Activated CD8-positive, alpha-beta T cell treated with anti-CD3 and anti-CD28 coated beads, Interleukin-2, amount 10 ng/mL, durations not matched to agents 7 days and 5 days (primary cell): ENCODE measurements at regions of chr5 and their contacts with region 1.

Region 1: GRCh38 chr5:77143998-77144836 is 57.1 kb upstream of the ZBED3 start:
- DNase-seq: peak; percentile 74
- ATAC-seq: peak; percentile 68
- H3K4me3 Mint-ChIP-seq: no peak overlapping the region
- H3K27ac Mint-ChIP-seq: no peak overlapping the region
- H3K4me1 Mint-ChIP-seq: peaks cover 5% of the 10 kb centered on the region
- H3K27me3 Mint-ChIP-seq: peaks cover 3% of the 10 kb centered on the region

Region 2: GRCh38 chr5:77155179-77155785 is 11.1 kb after region 1 on chr5:
- CTCF ChIA-PET with region 1: interaction called, 10 read pairs
- POLR2A ChIA-PET with region 1: interaction called, 5 read pairs
- DNase-seq: peak; percentile 51
- ATAC-seq: peak; percentile 83
- H3K4me3 Mint-ChIP-seq: no peak overlapping the region
- H3K27ac Mint-ChIP-seq: peak overlapping the region; percentile 0
- H3K4me1 Mint-ChIP-seq: peaks cover 20% of the 10 kb centered on the region
- H3K27me3 Mint-ChIP-seq: peaks cover 10% of the 10 kb centered on the region

Region 3: GRCh38 chr5:77379558-77380061 is 235.4 kb after region 1 on chr5:
- CTCF ChIA-PET with region 1: no interaction called
- POLR2A ChIA-PET with region 1: no interaction called
- DNase-seq: no peak
- ATAC-seq: peak; percentile 51
- H3K4me3 Mint-ChIP-seq: no peak overlapping the region
- H3K27ac Mint-ChIP-seq: peak overlapping the region; percentile 44
- H3K4me1 Mint-ChIP-seq: peaks cover 15% of the 10 kb centered on the region
- H3K27me3 Mint-ChIP-seq: no peaks in the 10 kb centered on the region

Region 4: DNA sequence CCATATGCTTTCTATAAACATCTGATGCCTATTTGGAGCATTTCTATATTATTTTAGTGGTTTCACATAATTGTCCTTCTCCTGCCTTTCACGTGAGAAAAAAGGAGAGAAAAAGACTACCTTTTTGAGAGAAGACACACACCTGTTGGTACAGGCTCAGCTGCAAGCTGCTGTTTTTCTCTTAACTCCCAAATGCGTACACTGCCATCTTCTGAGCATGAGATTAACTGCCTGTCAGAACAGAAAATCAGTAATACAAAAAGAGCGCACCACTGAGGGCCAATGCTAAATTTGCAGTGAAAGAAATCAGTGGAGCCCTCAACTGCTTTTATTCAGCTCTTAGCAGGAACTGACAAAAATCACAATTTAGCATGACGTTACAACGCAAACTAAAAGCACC is 293.0 kb after region 1 on chr5:
- CTCF ChIA-PET with region 1: interaction called, 10 read pairs
- POLR2A ChIA-PET with region 1: no interaction called
- DNase-seq: no peak
- ATAC-seq: no peak
- H3K4me3 Mint-ChIP-seq: no peak overlapping the region
- H3K27ac Mint-ChIP-seq: no peak overlapping the region
- H3K4me1 Mint-ChIP-seq: no peaks in the 10 kb centered on the region
- H3K27me3 Mint-ChIP-seq: no peaks in the 10 kb centered on the region